ENCODE measurements at regions of chr2 and their contacts with region 1.

Region 1: GRCh38 chr2:39227628-39228412 is 15.9 kb downstream of the CDKL4 start:
- DNase-seq: peak; percentile 65 to 92 (median 80)
- ATAC-seq: peak; percentile 85
- H3K4me3 ChIP-seq: peak overlapping the region; percentile 31
- H3K4me3 Mint-ChIP-seq: peak overlapping the region; percentile 66
- H3K27ac ChIP-seq: no peak overlapping the region
- H3K27ac Mint-ChIP-seq: no peak overlapping the region
- H3K4me1 ChIP-seq: peaks cover 10% of the 10 kb centered on the region
- H3K4me1 Mint-ChIP-seq: peaks cover 22% of the 10 kb centered on the region
- H3K27me3 ChIP-seq: no peaks in the 10 kb centered on the region
- H3K27me3 Mint-ChIP-seq: no peaks in the 10 kb centered on the region
- CTCF ChIP-seq: peak; percentile 89

Region 2: DNA sequence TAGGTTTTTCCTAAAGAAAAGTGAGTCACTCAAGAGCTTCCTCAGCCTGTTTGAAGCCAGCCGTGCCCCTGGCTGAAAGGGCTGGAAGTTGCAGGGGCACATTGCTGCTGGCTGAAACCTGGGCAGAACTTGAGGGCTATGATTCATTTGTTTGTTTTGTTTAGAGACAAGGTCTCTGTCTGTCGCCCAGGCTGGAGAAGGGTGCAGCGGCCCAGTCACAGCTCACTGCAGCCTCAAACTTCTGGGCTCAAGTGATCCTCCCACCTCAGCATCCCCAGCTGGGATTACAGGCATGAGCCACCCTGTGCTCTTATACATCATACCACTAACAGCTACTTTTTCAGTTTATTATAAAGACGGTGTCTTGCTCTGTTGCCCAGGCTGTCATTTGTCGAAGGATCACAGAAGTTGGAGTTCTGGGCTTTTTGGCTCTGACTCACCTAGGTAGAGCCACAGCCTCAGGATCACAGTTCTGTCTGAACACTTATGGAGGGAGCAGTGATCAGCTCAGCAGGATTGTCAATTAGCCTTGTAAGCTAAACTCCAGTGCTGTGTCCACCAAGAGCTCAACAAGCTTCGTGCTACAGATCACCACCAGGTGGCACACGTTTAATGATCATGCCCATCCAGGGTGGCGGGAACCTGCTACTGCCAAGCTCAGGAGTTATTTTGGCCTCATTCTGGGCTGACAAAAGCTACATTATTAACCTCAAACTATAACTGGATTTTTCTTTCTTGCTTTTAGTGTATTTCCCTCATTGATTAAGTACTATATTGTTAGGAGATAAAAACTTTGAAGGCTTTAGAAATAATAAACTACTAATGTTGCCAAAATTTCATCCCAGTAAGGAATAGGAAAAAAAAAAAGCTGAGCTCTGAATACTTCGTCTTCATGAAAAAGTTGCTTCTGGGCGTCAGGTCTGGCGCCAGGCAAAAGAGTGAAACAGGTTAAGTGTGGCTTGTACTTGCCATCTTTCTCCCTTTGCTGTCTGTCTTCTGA is 280.3 kb before region 1 on chr2:
- CTCF ChIA-PET with region 1: interaction called, 45 read pairs
- POLR2A ChIA-PET with region 1: interaction called, 7 read pairs
- intact Hi-C with region 1: loop called (anchors 1 kb)
- DNase-seq: peak; percentile 27 to 78 (median 45)
- ATAC-seq: peak; percentile 61
- H3K4me3 ChIP-seq: no peak overlapping the region
- H3K4me3 Mint-ChIP-seq: no peak overlapping the region
- H3K27ac ChIP-seq: no peak overlapping the region
- H3K27ac Mint-ChIP-seq: no peak overlapping the region
- H3K4me1 ChIP-seq: no peaks in the 10 kb centered on the region
- H3K4me1 Mint-ChIP-seq: no peaks in the 10 kb centered on the region
- H3K27me3 ChIP-seq: no peaks in the 10 kb centered on the region
- H3K27me3 Mint-ChIP-seq: no peaks in the 10 kb centered on the region
- CTCF ChIP-seq: peak; percentile 69

Region 3: DNA sequence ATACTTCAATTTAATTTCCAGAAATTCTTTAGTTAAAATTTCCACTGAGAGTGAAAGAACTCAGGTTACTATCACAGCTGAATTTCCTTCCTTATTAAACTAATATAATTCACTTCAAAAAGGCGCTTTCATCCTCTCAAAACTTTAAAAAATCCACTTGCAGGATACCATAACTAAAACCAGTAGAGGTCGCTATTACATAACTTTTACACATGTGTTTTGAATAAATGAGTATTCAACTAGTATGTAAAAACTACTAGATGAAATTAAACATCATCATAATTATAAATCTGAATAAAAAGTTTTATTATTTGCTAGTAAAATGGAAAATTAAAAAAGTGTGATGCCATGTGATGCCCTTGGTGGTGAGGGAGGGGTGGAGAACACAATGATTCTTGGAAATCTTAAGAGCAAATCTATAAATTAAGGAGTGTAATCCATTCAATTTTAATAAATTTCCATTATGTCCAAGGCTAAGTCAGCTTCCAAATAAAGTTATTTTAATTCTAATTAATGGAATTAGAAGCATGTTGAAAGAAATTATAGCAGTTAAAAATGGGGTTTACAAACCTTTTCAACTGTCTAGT is 168.4 kb before region 1 on chr2:
- CTCF ChIA-PET with region 1: interaction called, 58 read pairs
- POLR2A ChIA-PET with region 1: interaction called, 5 read pairs
- intact Hi-C with region 1: loop called (anchors 1 kb)
- DNase-seq: peak in 3 of 14 experiments; percentile 74 to 76 (median 74)
- ATAC-seq: peak; percentile 39
- H3K4me3 ChIP-seq: no peak overlapping the region
- H3K4me3 Mint-ChIP-seq: no peak overlapping the region
- H3K27ac ChIP-seq: no peak overlapping the region
- H3K27ac Mint-ChIP-seq: no peak overlapping the region
- H3K4me1 ChIP-seq: no peaks in the 10 kb centered on the region
- H3K4me1 Mint-ChIP-seq: no peaks in the 10 kb centered on the region
- H3K27me3 ChIP-seq: no peaks in the 10 kb centered on the region
- H3K27me3 Mint-ChIP-seq: no peaks in the 10 kb centered on the region
- CTCF ChIP-seq: peak; percentile 86

Region 4: DNA sequence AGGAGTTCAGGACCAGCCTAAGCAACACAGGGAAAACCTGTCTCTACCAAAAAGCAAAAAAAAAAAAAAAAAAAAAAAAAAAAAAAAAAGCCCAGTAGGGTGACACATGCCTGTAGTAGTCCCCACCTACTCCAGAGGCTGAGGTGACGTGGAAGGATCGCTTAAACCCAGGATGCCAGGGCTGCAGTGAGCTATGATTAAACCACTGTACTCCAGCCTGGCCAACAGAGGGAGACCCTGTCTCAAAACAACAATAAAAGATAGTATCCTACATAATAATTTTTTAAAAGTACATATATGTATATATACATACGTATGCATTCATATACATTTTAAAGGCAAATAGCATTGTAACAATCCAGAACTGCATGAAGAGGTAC is 158.7 kb before region 1 on chr2:
- CTCF ChIA-PET with region 1: interaction called, 58 read pairs
- POLR2A ChIA-PET with region 1: no interaction called
- intact Hi-C with region 1: no loop called
- DNase-seq: peak in 5 of 14 experiments; percentile 0 to 45 (median 16)
- ATAC-seq: peak; percentile 51
- H3K4me3 ChIP-seq: no peak overlapping the region
- H3K4me3 Mint-ChIP-seq: no peak overlapping the region
- H3K27ac ChIP-seq: no peak overlapping the region
- H3K27ac Mint-ChIP-seq: peak overlapping the region; percentile 24
- H3K4me1 ChIP-seq: peaks cover 2% of the 10 kb centered on the region
- H3K4me1 Mint-ChIP-seq: peaks cover 19% of the 10 kb centered on the region
- H3K27me3 ChIP-seq: no peaks in the 10 kb centered on the region
- H3K27me3 Mint-ChIP-seq: no peaks in the 10 kb centered on the region
- CTCF ChIP-seq: no peak

Region 5: GRCh38 chr2:39216346-39217191 is 11.3 kb before region 1 on chr2:
- CTCF ChIA-PET with region 1: interaction called, 8 read pairs
- POLR2A ChIA-PET with region 1: interaction called, 17 read pairs
- intact Hi-C with region 1: no loop called
- DNase-seq: peak; percentile 51 to 94 (median 66)
- ATAC-seq: peak; percentile 86
- H3K4me3 ChIP-seq: no peak overlapping the region
- H3K4me3 Mint-ChIP-seq: peak overlapping the region; percentile 64
- H3K27ac ChIP-seq: peak overlapping the region; percentile 49 to 69
- H3K27ac Mint-ChIP-seq: peak overlapping the region; percentile 59
- H3K4me1 ChIP-seq: peaks cover 43% of the 10 kb centered on the region
- H3K4me1 Mint-ChIP-seq: peaks cover 33% of the 10 kb centered on the region
- H3K27me3 ChIP-seq: no peaks in the 10 kb centered on the region
- H3K27me3 Mint-ChIP-seq: no peaks in the 10 kb centered on the region
- CTCF ChIP-seq: no peak

Region 6: GRCh38 chr2:39476524-39476923 is 248.7 kb after region 1 on chr2:
- CTCF ChIA-PET with region 1: no interaction called
- POLR2A ChIA-PET with region 1: no interaction called
- intact Hi-C with region 1: no loop called
- DNase-seq: peak in 2 of 14 experiments; percentile 9 to 14
- ATAC-seq: no peak
- H3K4me3 ChIP-seq: no peak overlapping the region
- H3K4me3 Mint-ChIP-seq: no peak overlapping the region
- H3K27ac ChIP-seq: no peak overlapping the region
- H3K27ac Mint-ChIP-seq: no peak overlapping the region
- H3K4me1 ChIP-seq: no peaks in the 10 kb centered on the region
- H3K4me1 Mint-ChIP-seq: no peaks in the 10 kb centered on the region
- H3K27me3 ChIP-seq: no peaks in the 10 kb centered on the region
- H3K27me3 Mint-ChIP-seq: no peaks in the 10 kb centered on the region
- CTCF ChIP-seq: no peak